ENCODE measurements at regions of chr5 and their contacts with region 1.

Region 1: DNA sequence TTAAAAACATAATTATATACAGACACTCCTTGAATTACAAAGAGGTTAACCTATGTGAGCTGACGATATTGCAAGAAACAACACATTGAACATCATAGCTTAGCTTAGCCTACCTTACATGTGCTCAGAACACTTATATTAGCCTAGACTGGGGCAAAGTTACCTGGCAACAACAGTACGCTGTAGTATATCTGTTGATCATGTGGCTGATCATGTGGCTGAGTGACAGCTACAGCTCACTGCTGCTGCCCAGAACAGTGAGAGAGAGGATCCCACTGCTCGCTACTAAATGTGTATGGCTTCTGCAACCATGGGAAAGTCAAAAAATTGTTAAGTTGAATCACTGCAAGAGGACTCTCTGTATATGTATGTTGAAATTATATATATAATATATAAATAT is 169.9 kb downstream of the CDH9 start:
- DNase-seq: no peak
- ATAC-seq: no peak
- H3K4me3 ChIP-seq: no peak overlapping the region
- H3K27ac ChIP-seq: no peak overlapping the region
- H3K4me1 ChIP-seq: no peaks in the 10 kb centered on the region
- H3K27me3 ChIP-seq: no peaks in the 10 kb centered on the region
- CTCF ChIP-seq: no peak
- EP300 ChIP-seq: no peak
- POLR2A ChIP-seq: no peak
- RAD21 ChIP-seq: no peak

Region 2: GRCh38 chr5:26921439-26921838 is 52.9 kb after region 1 on chr5:
- CTCF ChIA-PET with region 1: no interaction called
- POLR2A ChIA-PET with region 1: no interaction called
- RAD21 ChIA-PET with region 1: no interaction called
- SMC1A ChIA-PET with region 1: no interaction called
- in situ Hi-C with region 1: no loop called
- intact Hi-C with region 1: loop called (anchors 10 kb)
- DNase-seq: no peak
- ATAC-seq: no peak
- H3K4me3 ChIP-seq: no peak overlapping the region
- H3K27ac ChIP-seq: no peak overlapping the region
- H3K4me1 ChIP-seq: no peaks in the 10 kb centered on the region
- H3K27me3 ChIP-seq: no peaks in the 10 kb centered on the region
- CTCF ChIP-seq: no peak
- EP300 ChIP-seq: no peak
- POLR2A ChIP-seq: no peak
- RAD21 ChIP-seq: no peak